ENCODE measurements at regions of chr1 and their contacts with region 1.

Region 1: GRCh38 chr1:26921540-26922430 is at the start of gene NUDC:
- DNase-seq: peak; percentile 87 to 97 (median 95)
- ATAC-seq: peak; percentile 97
- H3K4me3 ChIP-seq: peak within 1 kb of the TSS; percentile 79
- H3K4me3 Mint-ChIP-seq: peak within 1 kb of the TSS; percentile 82 to 98 (median 94)
- H3K27ac ChIP-seq: peak within 1 kb of the TSS; percentile 88
- H3K27ac Mint-ChIP-seq: peak within 1 kb of the TSS; percentile 88 to 98 (median 96)
- H3K4me1 ChIP-seq: peaks cover 11 to 12% of the 10 kb centered on the region in 2 donors
- H3K4me1 Mint-ChIP-seq: peaks cover 12 to 46% (median 34%) of the 10 kb centered on the region in 7 donors
- H3K27me3 ChIP-seq: no peaks in the 10 kb centered on the region
- H3K27me3 Mint-ChIP-seq: no peaks in the 10 kb centered on the region
- total RNA-seq, gene NUDC: 36.5 to 69.0 (median 40.5) TPM

Region 2: DNA sequence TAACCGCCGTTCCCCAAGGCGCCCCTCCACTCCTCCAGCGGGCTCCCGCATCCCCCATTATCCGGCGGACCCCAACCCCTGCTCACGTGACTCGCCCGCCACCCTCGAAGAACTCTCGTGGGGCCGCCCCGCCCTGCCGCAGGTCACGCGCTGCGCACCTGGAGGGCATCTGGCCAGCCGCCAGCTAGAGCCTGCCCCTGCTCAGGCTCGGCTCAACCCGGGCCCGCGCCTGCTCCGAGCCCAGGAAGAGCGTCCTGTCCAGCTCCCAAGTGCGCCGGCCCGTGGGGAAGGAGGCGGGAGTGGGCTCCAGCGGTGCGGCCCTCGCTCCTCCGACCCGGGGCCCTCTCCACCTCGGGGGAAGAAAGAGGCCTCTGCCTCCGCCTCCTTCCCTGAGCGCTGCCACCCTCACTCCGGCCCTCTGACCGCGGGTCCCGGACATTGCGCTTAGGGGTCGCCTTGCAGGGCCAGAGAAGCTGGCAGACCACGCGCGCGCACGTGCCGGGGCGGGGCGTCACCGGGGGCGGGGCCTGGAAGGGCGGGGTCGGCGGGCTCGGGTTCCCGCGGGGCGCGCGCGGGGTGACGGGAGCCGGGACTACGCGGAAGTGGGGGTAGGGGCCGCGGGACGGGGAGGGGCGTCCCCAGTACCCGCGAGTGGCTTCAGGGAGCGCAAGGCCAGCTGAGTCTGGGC is 421.2 kb before region 1 on chr1:
- CTCF ChIA-PET with region 1: no interaction called
- POLR2A ChIA-PET with region 1: no interaction called
- intact Hi-C with region 1: loop called in 1 of 2 experiments (anchors 1 kb)
- DNase-seq: peak; percentile 76 to 97 (median 86)
- ATAC-seq: peak; percentile 89
- H3K4me3 ChIP-seq: peak overlapping the region; percentile 95
- H3K4me3 Mint-ChIP-seq: peak overlapping the region; percentile 67 to 91 (median 88)
- H3K27ac ChIP-seq: peak overlapping the region; percentile 90
- H3K27ac Mint-ChIP-seq: peak overlapping the region; percentile 67 to 95 (median 91)
- H3K4me1 ChIP-seq: peaks cover 16% of the 10 kb centered on the region in 2 donors
- H3K4me1 Mint-ChIP-seq: peaks cover 1 to 31% (median 11%) of the 10 kb centered on the region in 7 donors
- H3K27me3 ChIP-seq: no peaks in the 10 kb centered on the region
- H3K27me3 Mint-ChIP-seq: no peaks in the 10 kb centered on the region

Region 3: DNA sequence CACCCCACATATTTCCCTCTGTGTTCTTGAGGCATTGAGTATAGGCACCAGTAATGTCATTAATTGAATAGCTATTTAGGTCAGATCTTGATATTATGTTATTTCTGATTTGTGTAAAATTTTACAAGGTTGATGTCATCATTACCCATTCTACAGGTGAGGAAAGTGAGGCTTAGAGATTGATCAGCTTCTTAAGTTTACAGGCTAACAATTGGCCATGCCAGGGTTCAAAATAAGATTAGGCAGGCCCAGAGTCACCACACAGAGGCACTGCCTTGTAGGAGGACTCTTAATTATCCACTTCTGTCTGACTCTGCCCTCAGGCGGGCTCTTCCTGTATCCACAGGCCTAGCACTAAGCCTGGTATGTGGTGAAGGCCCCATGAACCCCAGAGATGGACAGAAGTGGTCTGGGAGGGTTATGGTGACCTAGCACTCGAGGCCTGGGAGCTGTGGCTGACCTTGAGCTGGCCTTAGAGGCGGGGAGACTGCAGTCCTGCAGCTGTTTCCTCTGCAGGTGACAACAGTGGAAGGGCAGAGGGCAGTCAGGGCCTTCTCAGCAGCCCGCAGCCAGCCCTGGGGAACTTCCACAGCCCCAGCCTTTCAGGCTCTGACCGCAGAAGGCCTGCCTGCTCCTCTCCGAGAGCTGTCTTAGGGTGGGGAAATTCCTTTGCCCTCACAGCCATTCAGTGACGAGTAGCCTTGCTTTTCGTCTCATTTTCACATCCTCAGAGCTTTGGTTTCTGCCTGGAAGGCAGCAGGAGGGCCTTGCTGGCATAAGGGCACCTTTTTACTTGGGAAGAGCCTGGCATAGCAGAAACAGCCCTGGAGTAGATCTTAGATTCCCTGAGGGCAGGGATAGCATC is 83.1 kb before region 1 on chr1:
- CTCF ChIA-PET with region 1: no interaction called
- POLR2A ChIA-PET with region 1: no interaction called
- intact Hi-C with region 1: no loop called
- DNase-seq: no peak
- ATAC-seq: peak; percentile 93
- H3K4me3 ChIP-seq: no peak overlapping the region
- H3K4me3 Mint-ChIP-seq: peak overlapping the region in 1 of 10 donors; percentile 7
- H3K27ac ChIP-seq: peak overlapping the region; percentile 45
- H3K27ac Mint-ChIP-seq: peak overlapping the region in 7 of 9 donors; percentile 8 to 77 (median 56)
- H3K4me1 ChIP-seq: peaks cover 13 to 29% of the 10 kb centered on the region in 2 donors
- H3K4me1 Mint-ChIP-seq: peaks cover 7 to 30% (median 16%) of the 10 kb centered on the region in 7 donors
- H3K27me3 ChIP-seq: no peaks in the 10 kb centered on the region
- H3K27me3 Mint-ChIP-seq: no peaks in the 10 kb centered on the region

Region 4: DNA sequence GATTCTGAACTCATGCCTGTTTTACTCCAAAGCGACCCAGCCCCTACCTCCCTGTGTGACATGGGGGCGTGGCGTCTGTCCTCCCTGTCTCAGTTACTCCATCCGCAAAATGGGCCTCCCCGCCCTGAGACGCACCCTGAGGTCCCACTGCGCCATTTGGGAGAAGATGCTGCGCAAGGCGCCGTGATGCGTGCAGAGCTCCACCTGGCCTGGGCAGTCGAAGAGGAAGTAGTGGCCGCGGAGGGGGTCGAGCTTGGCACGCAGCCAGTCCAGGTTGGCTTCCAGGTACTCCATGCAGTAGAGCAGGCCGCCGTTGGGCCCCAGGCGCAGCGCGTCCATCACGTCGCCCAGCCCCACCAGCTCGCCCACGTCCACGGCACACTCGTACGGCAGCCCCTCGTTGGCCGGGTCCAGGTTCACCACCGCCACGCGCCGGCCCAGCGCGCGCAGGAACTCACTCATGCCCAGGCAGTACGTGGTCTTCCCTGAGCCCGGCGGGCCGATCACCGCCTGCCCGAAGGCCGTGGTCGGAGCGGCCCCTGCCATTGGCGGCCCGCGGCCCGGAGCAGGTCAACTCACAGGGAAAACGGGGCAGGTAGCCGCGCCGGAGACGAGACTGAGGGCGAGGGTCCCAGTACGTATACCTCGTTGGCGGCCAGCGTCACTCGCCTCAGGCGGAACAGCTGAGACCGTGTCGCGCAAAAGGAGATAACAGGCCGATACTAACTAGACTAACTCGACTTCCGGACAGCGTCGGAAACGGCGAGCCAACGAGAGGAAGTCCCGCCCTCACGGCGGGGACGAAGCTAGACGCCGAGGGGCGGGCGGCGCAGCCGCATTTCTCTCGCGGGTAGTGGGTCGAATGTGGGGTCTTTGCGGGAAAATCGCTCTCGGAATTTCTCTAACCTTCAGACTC is 32.0 kb before region 1 on chr1 and contains the start of gene GPN2:
- CTCF ChIA-PET with region 1: interaction called, 3 read pairs
- POLR2A ChIA-PET with region 1: interaction called, 8 read pairs
- intact Hi-C with region 1: loop called (anchors 1 kb)
- DNase-seq: peak; percentile 49 to 78 (median 73)
- ATAC-seq: peak; percentile 97
- H3K4me3 ChIP-seq: peak within 1 kb of the TSS; percentile 98
- H3K4me3 Mint-ChIP-seq: peak within 1 kb of the TSS; percentile 89 to 98 (median 94)
- H3K27ac ChIP-seq: peak within 1 kb of the TSS; percentile 94
- H3K27ac Mint-ChIP-seq: peak within 1 kb of the TSS; percentile 93 to 96 (median 95)
- H3K4me1 ChIP-seq: peaks cover 7% of the 10 kb centered on the region in 2 donors
- H3K4me1 Mint-ChIP-seq: peaks cover 22 to 43% (median 35%) of the 10 kb centered on the region in 7 donors
- H3K27me3 ChIP-seq: no peaks in the 10 kb centered on the region
- H3K27me3 Mint-ChIP-seq: no peaks in the 10 kb centered on the region
- total RNA-seq, gene GPN2: 22.1 to 50.6 (median 34.8) TPM

Region 5: GRCh38 chr1:26993237-26994019 is 71.6 kb after region 1 on chr1 and contains the start of gene TRNP1:
- CTCF ChIA-PET with region 1: no interaction called
- POLR2A ChIA-PET with region 1: no interaction called
- intact Hi-C with region 1: loop called in 1 of 2 experiments (anchors 2 kb)
- DNase-seq: peak; percentile 24 to 79 (median 50)
- ATAC-seq: peak; percentile 75
- H3K4me3 ChIP-seq: peak within 1 kb of the TSS; percentile 53
- H3K4me3 Mint-ChIP-seq: peak within 1 kb of the TSS; percentile 74 to 91 (median 78)
- H3K27ac ChIP-seq: no peak within 1 kb of the TSS
- H3K27ac Mint-ChIP-seq: peak within 1 kb of the TSS in 3 of 9 donors; percentile 48 to 68 (median 50)
- H3K4me1 ChIP-seq: peaks cover 5 to 21% of the 10 kb centered on the region in 2 donors
- H3K4me1 Mint-ChIP-seq: peaks cover 5 to 27% (median 22%) of the 10 kb centered on the region in 7 donors
- H3K27me3 ChIP-seq: peaks cover 0 to 18% of the 10 kb centered on the region in 2 donors
- H3K27me3 Mint-ChIP-seq: peaks cover 37 to 71% (median 42%) of the 10 kb centered on the region in 5 donors
- total RNA-seq, gene TRNP1: 0.19 to 5.0 TPM in 2 of 5 experiments, not detected in the others

Region 6: GRCh38 chr1:27772933-27773825 is 851.4 kb after region 1 on chr1 and contains the start of gene STX12:
- CTCF ChIA-PET with region 1: no interaction called
- POLR2A ChIA-PET with region 1: no interaction called
- intact Hi-C with region 1: loop called in 1 of 2 experiments (anchors 5 kb)
- DNase-seq: peak; percentile 97 to 100 (median 98)
- ATAC-seq: peak; percentile 96
- H3K4me3 ChIP-seq: peak within 1 kb of the TSS; percentile 97
- H3K4me3 Mint-ChIP-seq: peak within 1 kb of the TSS; percentile 84 to 97 (median 94)
- H3K27ac ChIP-seq: peak within 1 kb of the TSS; percentile 94
- H3K27ac Mint-ChIP-seq: peak within 1 kb of the TSS; percentile 90 to 99 (median 96)
- H3K4me1 ChIP-seq: peaks cover 10 to 13% of the 10 kb centered on the region in 2 donors
- H3K4me1 Mint-ChIP-seq: peaks cover 26 to 43% (median 37%) of the 10 kb centered on the region in 7 donors
- H3K27me3 ChIP-seq: no peaks in the 10 kb centered on the region
- H3K27me3 Mint-ChIP-seq: no peaks in the 10 kb centered on the region
- total RNA-seq, gene STX12: 23.9 to 38.7 (median 28.9) TPM

Measured in naive thymus-derived CD4-positive, alpha-beta T cell (primary cell).